ENCODE measurements at regions of chr19 and their contacts with region 1.

Region 1: DNA sequence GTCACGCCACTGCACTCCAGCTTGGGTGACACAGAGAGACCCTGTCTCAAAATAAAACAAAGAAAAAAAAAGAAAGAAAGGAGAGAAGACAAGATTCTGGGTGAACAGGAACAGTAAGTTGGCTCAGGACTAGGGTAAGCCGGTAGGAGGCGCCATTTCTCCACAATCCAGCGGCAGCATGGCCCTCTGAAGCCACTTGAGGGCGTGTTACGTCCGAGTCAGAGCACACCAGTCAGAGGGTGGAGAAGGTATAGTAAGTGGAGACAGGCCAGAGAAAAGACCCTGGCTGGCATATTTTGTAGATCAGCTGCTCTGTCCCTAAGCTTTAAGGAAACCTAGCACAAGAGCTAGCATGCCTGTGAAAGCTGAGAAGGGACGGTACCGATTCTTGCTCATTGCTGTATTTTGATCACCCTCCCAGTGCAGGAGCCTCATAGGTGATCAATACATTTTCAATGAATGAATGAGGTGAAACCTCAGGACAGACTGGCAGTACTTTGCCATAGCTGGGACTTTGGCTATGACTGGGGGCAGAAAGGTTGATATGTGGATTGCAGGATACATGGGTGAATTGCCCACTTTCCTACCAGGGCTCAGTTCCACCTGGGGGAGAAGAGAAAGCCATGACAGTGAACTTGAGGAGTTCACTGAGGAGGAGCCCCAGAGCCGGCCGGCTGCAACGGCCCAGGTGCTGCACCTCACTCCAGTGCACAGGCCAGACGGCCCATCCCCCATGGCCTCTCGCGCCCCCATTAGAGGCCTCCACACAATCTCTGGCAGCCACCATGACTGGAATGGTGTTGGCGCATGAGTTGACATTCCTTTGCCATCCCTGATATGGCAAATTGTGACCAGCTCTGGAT is 23.5 kb downstream of the POU2F2 start:
- DNase-seq: peak; percentile 96
- H3K4me3 Mint-ChIP-seq: no peak overlapping the region
- H3K27ac Mint-ChIP-seq: peak overlapping the region; percentile 4
- H3K4me1 Mint-ChIP-seq: peaks cover 49% of the 10 kb centered on the region
- H3K27me3 Mint-ChIP-seq: no peaks in the 10 kb centered on the region

Region 2: DNA sequence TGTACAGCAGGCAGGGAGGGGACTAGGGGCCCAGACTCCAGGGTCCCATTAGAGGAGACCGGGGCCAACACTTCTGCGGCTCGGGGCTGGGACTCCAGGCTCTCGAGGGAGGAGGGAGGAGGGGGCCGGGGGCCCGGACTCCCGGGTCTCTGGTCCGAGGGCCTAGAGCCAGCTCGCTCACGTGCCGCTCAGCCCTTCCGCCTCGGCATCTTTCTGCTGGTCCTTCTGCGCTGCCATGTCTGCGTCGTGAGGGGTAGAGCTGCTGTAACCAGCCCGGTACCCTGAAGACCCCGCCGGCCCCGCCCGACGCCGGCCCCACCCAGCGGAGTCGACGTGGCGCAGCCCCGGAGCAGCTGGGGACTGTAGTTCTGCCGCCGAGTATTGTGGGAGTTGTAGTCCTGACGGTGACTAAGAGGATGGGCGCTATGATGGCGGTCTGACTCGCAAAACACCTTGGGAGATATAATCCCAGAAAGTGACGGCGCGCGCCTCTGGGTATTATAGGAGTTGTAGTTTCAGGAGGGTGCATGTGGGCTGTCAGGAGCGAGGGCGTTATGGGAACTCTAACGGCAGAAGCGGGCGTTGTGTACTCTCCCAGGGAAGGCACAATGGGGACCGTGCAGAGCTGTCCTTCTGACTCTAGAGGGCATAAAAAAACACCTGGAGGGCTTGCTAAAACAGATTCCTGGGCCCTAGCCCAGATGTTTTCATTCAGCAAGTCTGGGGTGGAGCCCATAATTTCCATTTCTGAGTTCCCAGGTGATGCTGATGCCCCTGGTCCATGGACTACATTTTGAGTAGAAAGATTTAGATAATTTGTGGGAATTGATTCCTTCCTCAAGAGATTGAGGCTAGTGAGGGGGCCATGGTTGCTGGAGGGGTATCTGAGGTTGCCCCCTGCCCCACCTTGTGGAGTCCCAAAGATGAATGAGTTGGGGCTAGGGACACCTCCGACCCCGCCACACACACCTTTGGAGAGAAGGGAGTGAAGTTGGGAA is 149.4 kb before region 1 on chr19 and contains the start of gene RABAC1:
- intact Hi-C with region 1: no loop called
- DNase-seq: peak; percentile 97
- H3K4me3 Mint-ChIP-seq: peak within 1 kb of the TSS; percentile 89
- H3K27ac Mint-ChIP-seq: peak within 1 kb of the TSS; percentile 92
- H3K4me1 Mint-ChIP-seq: peaks cover 14% of the 10 kb centered on the region
- H3K27me3 Mint-ChIP-seq: no peaks in the 10 kb centered on the region
- total RNA-seq, gene RABAC1: 37.2 and 41.5 TPM in 2 replicates

Region 3: DNA sequence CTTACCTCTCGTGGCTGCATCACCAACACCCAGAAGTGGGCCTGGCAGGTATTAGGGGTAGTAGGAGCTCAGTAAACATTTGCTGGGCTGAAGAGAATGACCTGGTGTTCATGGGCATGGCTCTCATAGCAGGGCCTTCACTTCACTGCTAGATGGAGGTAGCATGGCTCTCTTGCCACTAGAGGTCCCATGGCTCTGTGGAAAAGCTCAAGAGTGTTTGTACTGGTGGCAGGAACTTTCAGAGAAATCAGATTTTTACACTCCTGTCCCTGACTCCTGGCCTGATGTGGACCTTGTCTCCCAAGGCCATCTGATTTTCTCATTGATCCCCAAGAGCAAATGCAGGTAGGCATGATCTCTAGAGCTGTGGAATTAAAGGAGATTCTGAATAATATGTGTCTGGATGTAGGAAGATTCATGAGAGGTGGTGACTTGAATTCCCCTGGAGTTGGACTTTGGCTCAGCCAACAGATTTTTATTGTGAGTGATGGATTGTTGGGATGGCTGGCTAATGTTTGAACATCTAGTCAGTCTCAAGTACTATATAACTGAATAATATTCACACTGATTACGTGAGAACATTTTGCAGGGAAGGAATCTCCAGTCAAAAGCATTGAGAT is 27.1 kb before region 1 on chr19:
- intact Hi-C with region 1: no loop called
- DNase-seq: peak; percentile 74
- H3K4me3 Mint-ChIP-seq: no peak overlapping the region
- H3K27ac Mint-ChIP-seq: no peak overlapping the region
- H3K4me1 Mint-ChIP-seq: peaks cover 26% of the 10 kb centered on the region
- H3K27me3 Mint-ChIP-seq: no peaks in the 10 kb centered on the region

Region 4: DNA sequence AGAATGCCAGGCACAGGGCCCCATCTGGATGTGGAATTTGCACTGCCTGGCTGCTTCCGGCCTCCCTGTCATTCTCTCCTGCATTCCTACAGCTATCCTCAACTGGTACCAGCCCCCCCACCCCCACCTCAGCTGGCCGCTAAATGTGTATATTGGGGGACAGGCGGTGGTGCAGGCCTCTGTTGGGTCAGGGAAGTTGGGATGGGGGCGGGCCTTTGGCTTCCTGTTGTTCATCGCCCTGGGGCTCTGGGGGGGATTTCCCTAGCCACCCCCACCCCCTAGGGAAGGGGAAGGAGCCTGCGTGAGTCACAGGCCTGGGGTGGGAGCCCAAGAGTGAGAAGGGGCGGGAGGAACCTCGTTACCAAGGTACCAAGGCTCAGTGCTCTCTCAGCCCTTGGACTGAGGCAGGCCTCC is 12.9 kb after region 1 on chr19:
- intact Hi-C with region 1: loop called (anchors 1 kb)
- DNase-seq: peak; percentile 92
- H3K4me3 Mint-ChIP-seq: peak overlapping the region; percentile 80
- H3K27ac Mint-ChIP-seq: peak overlapping the region; percentile 95
- H3K4me1 Mint-ChIP-seq: peaks cover 52% of the 10 kb centered on the region
- H3K27me3 Mint-ChIP-seq: no peaks in the 10 kb centered on the region

Region 5: DNA sequence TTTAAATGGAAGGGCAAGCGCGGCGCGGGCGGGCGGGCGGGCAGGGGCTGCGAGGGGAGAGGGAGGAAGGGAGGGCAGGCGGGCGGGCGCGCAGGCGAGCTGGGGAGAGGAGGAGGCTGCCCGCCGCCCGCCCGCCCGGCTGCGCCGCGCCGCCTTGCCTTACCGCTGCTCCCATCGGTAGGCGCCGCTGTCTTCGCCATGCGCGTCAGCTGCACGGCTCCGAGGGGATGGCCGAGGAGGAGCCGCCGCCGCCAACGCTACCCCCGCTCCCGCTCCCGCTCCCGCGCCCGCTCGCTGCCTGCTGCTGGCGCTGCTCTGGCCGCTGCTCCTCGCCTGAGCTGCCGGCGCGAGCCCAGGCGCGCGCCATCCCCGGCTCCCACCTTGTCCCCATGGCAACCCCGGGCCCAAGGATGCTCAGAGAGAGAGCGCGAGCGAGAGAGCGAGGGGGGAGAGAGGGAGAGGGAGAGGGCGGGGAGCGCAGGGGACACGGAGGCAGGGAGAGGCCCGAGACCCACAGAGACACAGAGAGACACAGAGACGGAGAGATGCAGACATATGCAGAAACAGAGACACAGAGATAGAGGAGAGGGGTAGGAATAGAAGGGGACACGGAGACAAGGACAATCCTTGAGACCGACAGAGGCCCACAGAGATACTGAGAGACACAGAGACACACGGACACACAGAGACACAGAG is 68.4 kb after region 1 on chr19:
- intact Hi-C with region 1: loop called (anchors 2 kb)
- DNase-seq: peak; percentile 94
- H3K4me3 Mint-ChIP-seq: peak overlapping the region; percentile 90
- H3K27ac Mint-ChIP-seq: no peak overlapping the region
- H3K4me1 Mint-ChIP-seq: peaks cover 16% of the 10 kb centered on the region
- H3K27me3 Mint-ChIP-seq: peaks cover 41% of the 10 kb centered on the region

Region 6: GRCh38 chr19:42184401-42184861 is 75.7 kb after region 1 on chr19:
- intact Hi-C with region 1: loop called (anchors 1 kb)
- DNase-seq: peak; percentile 91
- H3K4me3 Mint-ChIP-seq: peak overlapping the region; percentile 21
- H3K27ac Mint-ChIP-seq: peak overlapping the region; percentile 64
- H3K4me1 Mint-ChIP-seq: peaks cover 42% of the 10 kb centered on the region
- H3K27me3 Mint-ChIP-seq: peaks cover 14% of the 10 kb centered on the region

Measured in activated CD4-positive, alpha-beta T cell treated with anti-CD3 and anti-CD28 coated beads, Interleukin-2, amount 10 ng/mL, durations not matched to agents 24 days and 14 days (primary cell).